Common myeloid progenitor, CD34-positive (primary cell): ENCODE measurements at regions of chr16 and their contacts with region 1.

Region 1: DNA sequence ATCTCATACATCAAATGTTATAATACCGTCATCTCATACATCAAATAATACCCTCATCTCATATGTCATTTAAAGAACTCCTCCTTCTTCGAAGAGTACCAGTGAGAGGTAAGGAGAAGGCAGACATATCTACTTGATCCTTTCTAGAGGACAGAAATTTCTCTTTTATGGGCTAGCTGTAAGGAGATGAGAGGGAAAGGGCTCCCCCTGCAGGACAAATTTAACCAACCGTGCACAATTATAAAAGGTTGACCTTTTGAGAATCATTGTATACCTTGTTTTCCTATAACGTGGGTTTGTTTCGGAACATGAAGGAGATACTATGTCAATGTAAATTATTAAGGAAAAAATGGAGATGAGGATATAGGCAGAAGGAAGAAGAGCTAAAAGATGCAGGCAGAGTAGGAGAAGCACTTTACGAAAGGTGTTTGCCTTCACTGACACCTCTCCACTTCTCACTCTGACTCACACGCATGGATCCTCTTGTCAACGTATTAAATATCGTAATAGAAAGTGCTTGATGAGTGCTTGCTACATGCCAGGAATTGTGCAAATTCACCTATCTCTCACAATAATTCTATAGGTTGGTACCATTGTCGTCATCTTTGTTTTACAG is 465.9 kb upstream of the ERCC4 start:
- DNase-seq: peak; percentile 31 to 69 (median 60)
- H3K4me3 ChIP-seq: no peak overlapping the region
- H3K27ac ChIP-seq: no peak overlapping the region
- H3K4me1 ChIP-seq: peaks cover 0 to 9% (median 0%) of the 10 kb centered on the region in 4 experiments
- H3K27me3 ChIP-seq: peaks cover 0 to 2% (median 0%) of the 10 kb centered on the region in 5 experiments

Region 2: DNA sequence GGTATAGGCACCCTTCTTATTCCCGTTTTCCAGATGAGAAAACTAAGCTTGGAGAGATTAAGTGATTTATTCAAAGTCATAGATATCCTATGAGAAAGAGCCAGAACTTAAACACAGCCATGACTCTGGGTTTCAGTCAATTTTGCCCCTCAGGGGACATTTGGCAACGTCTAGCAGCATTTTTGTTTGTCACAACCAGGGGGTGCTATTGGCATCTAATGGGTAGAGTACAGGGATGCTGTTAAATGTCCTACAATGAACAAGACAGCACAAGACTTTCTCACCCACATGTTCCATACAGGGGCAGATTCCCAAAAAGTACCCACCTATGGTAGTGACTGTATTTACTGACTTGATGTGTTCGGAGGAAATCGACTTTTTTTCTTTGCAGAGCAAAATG is 557.5 kb before region 1 on chr16:
- CTCF ChIA-PET with region 1: interaction called, 49 read pairs
- POLR2A ChIA-PET with region 1: no interaction called
- DNase-seq: peak; percentile 47 to 73 (median 72)
- H3K4me3 ChIP-seq: no peak overlapping the region
- H3K27ac ChIP-seq: no peak overlapping the region
- H3K4me1 ChIP-seq: peaks cover 0 to 6% (median under 1%) of the 10 kb centered on the region in 4 experiments
- H3K27me3 ChIP-seq: peaks cover 8 to 45% (median 17%) of the 10 kb centered on the region in 5 experiments

Region 3: DNA sequence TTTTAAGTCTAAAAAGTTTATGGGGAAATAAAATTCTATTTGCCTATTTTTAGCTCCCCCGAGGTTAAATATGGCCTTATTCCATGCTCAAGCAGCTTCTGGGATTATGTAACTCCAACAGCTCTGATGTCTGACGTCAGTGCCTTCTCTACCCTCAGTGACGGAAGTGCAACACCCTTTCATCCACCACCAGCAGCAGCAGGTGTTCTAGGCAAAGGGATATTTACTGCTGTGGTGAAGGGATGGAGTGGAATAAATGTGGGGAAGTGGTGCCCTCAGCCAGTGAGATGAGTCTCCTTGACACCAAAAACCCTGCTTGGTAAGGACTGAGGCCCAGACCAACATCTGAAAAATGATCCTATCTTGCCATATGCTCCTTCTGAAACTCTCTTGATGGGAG is 305.2 kb before region 1 on chr16:
- CTCF ChIA-PET with region 1: no interaction called
- POLR2A ChIA-PET with region 1: no interaction called
- DNase-seq: no peak
- H3K4me3 ChIP-seq: no peak overlapping the region
- H3K27ac ChIP-seq: no peak overlapping the region
- H3K4me1 ChIP-seq: no peaks in the 10 kb centered on the region
- H3K27me3 ChIP-seq: no peaks in the 10 kb centered on the region

Region 4: GRCh38 chr16:13419589-13419988 is 34.5 kb before region 1 on chr16:
- CTCF ChIA-PET with region 1: no interaction called
- POLR2A ChIA-PET with region 1: no interaction called
- DNase-seq: no peak
- H3K4me3 ChIP-seq: no peak overlapping the region
- H3K27ac ChIP-seq: no peak overlapping the region
- H3K4me1 ChIP-seq: peaks cover 0 to 3% (median 0%) of the 10 kb centered on the region in 4 experiments
- H3K27me3 ChIP-seq: no peaks in the 10 kb centered on the region

Region 5: DNA sequence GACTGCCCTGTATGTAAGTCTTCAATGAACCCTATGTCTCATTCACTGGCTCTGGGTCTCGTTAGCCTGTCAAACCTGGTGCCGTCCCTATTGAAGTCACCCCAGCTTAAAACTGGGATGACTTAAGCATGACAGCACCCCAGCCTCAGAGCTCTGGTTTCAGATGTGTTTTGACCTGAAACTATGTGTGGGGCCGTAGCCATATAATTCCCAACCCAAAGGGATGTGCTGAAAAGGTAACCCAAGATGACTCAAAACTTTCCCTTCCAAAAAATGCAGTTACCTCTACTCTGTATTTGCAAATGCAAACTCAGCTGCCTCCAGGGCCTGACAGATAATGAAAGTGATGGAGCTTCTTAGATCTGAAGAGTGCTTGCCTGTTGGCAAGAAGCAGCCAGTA is 12.4 kb before region 1 on chr16:
- CTCF ChIA-PET with region 1: interaction called, 10 read pairs
- POLR2A ChIA-PET with region 1: interaction called, 3 read pairs
- DNase-seq: no peak
- H3K4me3 ChIP-seq: no peak overlapping the region
- H3K27ac ChIP-seq: no peak overlapping the region
- H3K4me1 ChIP-seq: peaks cover 0 to 3% (median 2%) of the 10 kb centered on the region in 4 experiments
- H3K27me3 ChIP-seq: no peaks in the 10 kb centered on the region